GM12878 (cell line): ENCODE measurements at regions of chr4 and their contacts with region 1.

Region 1: DNA sequence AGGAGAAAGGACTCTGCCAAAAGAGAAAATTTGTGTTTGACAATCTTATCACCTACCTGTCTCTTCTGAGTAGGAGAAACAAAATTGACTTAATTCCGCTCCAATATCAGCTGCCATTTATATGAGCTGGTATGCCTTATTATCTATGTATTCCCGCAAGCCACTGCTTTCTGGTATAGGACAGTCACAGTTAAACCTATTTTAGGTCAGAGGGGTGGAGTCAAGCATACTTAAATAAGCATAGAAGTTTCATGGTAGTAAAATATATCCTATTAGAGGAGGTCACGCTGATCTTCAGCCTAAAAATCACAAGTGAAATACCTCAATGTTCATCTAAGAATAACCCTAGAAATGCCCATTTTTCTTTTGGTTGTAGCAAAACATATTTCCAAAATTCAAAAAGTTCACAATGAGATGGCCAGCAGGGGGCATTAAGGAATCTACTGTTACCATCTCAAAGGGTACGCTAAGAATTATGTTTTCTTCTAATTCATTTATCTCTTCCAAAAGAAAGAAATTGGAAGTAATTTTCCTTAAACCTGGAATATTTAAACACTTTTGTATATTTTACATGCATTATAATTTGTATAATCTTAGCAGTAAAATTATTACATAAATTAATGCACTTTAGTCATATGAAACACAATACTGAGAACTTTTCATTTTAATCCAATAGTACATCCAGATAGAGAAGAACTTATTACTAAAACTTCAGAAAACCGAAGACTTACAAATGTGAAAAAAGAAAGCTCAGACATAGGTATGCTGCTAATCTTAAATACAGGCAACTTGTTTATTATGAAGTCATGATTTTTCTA is 10.5 kb downstream of the PPAT start:
- DNase-seq: no peak
- ATAC-seq: peak; percentile 53
- H3K4me3 ChIP-seq: no peak overlapping the region
- H3K27ac ChIP-seq: no peak overlapping the region
- H3K4me1 ChIP-seq: peaks cover 5% of the 10 kb centered on the region
- H3K27me3 ChIP-seq: no peaks in the 10 kb centered on the region
- CTCF ChIP-seq: peak; percentile 53 to 57 (median 55)
- EP300 ChIP-seq: no peak
- POLR2A ChIP-seq: no peak
- RAD21 ChIP-seq: peak; percentile 55

Region 2: GRCh38 chr4:56387023-56388001 is 37.6 kb before region 1 on chr4 and contains the start of gene AASDH:
- CTCF ChIA-PET with region 1: interaction called, 10 read pairs
- POLR2A ChIA-PET with region 1: interaction called, 4 read pairs
- RAD21 ChIA-PET with region 1: interaction called, 6 read pairs
- SMC1A ChIA-PET with region 1: interaction called, 4 read pairs
- in situ Hi-C with region 1: no loop called
- intact Hi-C with region 1: no loop called
- DNase-seq: peak; percentile 87
- ATAC-seq: peak; percentile 96
- H3K4me3 ChIP-seq: peak within 1 kb of the TSS; percentile 83
- H3K27ac ChIP-seq: peak within 1 kb of the TSS; percentile 90
- H3K4me1 ChIP-seq: peaks cover 5% of the 10 kb centered on the region
- H3K27me3 ChIP-seq: no peaks in the 10 kb centered on the region
- CTCF ChIP-seq: no peak
- EP300 ChIP-seq: no peak
- POLR2A ChIP-seq: peak; percentile 97
- RAD21 ChIP-seq: no peak
- polyA plus RNA-seq, gene AASDH: 11.6 to 19.1 TPM

Region 3: DNA sequence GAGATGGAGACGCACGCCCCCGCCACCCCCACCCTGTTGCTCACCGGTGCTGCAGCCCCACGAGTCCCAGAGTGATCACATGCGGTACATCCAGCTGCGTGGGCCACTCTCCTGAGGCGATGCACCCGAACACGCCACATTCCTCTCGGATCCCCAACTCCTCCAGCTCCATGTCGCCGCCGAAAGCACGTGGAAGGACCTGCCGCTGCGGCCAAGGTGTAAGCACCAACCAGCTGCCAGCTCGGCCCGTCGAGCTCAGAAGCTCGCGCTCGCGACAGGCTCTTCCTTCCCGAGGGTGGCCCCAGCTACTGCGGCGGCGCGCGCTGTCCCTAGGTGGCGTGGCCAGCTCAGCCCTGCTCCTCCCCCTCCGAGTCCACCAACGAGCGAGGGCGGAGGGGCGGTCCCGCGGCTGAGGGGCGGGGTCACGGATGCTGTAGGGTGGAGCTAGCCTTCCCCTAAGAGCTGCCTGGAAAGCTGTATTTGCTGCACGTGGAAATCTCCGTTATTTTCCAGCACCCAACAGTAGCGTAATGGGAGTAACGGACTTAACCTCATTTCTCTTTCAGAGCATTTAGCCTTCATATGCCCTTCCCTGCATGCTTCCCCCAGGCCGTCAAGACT is 10.5 kb after region 1 on chr4 and contains the start of gene PPAT:
- CTCF ChIA-PET with region 1: interaction called, 89 read pairs
- POLR2A ChIA-PET with region 1: interaction called, 13 read pairs
- RAD21 ChIA-PET with region 1: interaction called, 41 read pairs
- SMC1A ChIA-PET with region 1: interaction called, 48 read pairs
- in situ Hi-C with region 1: no loop called
- intact Hi-C with region 1: no loop called
- DNase-seq: peak; percentile 94
- ATAC-seq: peak; percentile 81
- H3K4me3 ChIP-seq: peak within 1 kb of the TSS; percentile 90
- H3K27ac ChIP-seq: peak within 1 kb of the TSS; percentile 98
- H3K4me1 ChIP-seq: no peaks in the 10 kb centered on the region
- H3K27me3 ChIP-seq: no peaks in the 10 kb centered on the region
- CTCF ChIP-seq: peak in 2 of 3 experiments; percentile 7 to 15; a peak in 3 of 6 replicates
- EP300 ChIP-seq: no peak
- POLR2A ChIP-seq: peak; percentile 94
- RAD21 ChIP-seq: no peak
- polyA plus RNA-seq, gene PPAT: 24.9 to 32.6 TPM

Region 4: GRCh38 chr4:56460085-56460484 is 35.2 kb after region 1 on chr4:
- CTCF ChIA-PET with region 1: interaction called, 12 read pairs
- POLR2A ChIA-PET with region 1: interaction called, 5 read pairs
- RAD21 ChIA-PET with region 1: interaction called, 3 read pairs
- SMC1A ChIA-PET with region 1: interaction called, 5 read pairs
- in situ Hi-C with region 1: no loop called
- intact Hi-C with region 1: no loop called
- DNase-seq: no peak
- ATAC-seq: no peak
- H3K4me3 ChIP-seq: no peak overlapping the region
- H3K27ac ChIP-seq: no peak overlapping the region
- H3K4me1 ChIP-seq: no peaks in the 10 kb centered on the region
- H3K27me3 ChIP-seq: no peaks in the 10 kb centered on the region
- CTCF ChIP-seq: no peak
- EP300 ChIP-seq: no peak
- POLR2A ChIP-seq: no peak
- RAD21 ChIP-seq: no peak

Region 5: DNA sequence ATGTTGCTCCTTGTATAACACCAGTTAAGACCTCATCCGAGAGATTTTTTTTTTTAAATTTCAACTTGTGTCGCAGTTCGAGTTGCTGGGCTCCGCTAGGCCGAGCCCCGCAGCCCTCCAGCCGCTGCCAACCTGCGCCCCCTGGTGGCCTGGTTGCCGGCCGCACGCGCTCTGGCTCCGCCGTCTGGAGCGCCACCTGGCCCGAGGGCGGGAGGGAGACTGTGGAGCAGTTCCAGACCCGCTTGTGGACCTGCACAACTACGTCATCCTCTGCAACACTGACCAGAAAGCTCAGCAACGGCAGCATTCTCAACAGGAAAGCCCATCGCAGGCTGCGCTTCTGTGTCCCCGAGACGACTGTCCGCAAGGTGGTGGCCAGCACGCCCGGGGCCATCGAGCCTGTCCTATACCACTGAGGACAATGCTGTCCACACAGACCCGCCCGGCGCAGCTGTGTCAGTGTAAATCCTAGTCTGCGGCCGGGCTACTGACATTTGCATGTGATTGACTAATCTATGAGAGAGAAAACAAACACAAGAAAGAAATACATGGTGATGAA is 119.7 kb after region 1 on chr4:
- CTCF ChIA-PET with region 1: interaction called, 10 read pairs
- POLR2A ChIA-PET with region 1: no interaction called
- RAD21 ChIA-PET with region 1: interaction called, 5 read pairs
- SMC1A ChIA-PET with region 1: interaction called, 5 read pairs
- in situ Hi-C with region 1: no loop called
- intact Hi-C with region 1: loop called (anchors 1 kb)
- DNase-seq: peak; percentile 17
- ATAC-seq: peak; percentile 100
- H3K4me3 ChIP-seq: no peak overlapping the region
- H3K27ac ChIP-seq: no peak overlapping the region
- H3K4me1 ChIP-seq: no peaks in the 10 kb centered on the region
- H3K27me3 ChIP-seq: no peaks in the 10 kb centered on the region
- CTCF ChIP-seq: peak; percentile 94 to 99 (median 97); a peak in 5 of 6 replicates
- EP300 ChIP-seq: no peak
- POLR2A ChIP-seq: no peak
- RAD21 ChIP-seq: peak; percentile 78

Region 6: GRCh38 chr4:56786955-56787354 is 362.0 kb after region 1 on chr4:
- CTCF ChIA-PET with region 1: no interaction called
- POLR2A ChIA-PET with region 1: no interaction called
- RAD21 ChIA-PET with region 1: no interaction called
- SMC1A ChIA-PET with region 1: no interaction called
- in situ Hi-C with region 1: no loop called
- intact Hi-C with region 1: no loop called
- DNase-seq: no peak
- ATAC-seq: no peak
- H3K4me3 ChIP-seq: no peak overlapping the region
- H3K27ac ChIP-seq: no peak overlapping the region
- H3K4me1 ChIP-seq: peaks cover 7% of the 10 kb centered on the region
- H3K27me3 ChIP-seq: no peaks in the 10 kb centered on the region
- CTCF ChIP-seq: no peak
- EP300 ChIP-seq: no peak
- POLR2A ChIP-seq: no peak
- RAD21 ChIP-seq: no peak

Region 7: GRCh38 chr4:56843421-56843899 is 418.6 kb after region 1 on chr4:
- CTCF ChIA-PET with region 1: interaction called, 5 read pairs
- POLR2A ChIA-PET with region 1: no interaction called
- RAD21 ChIA-PET with region 1: interaction called, 3 read pairs
- SMC1A ChIA-PET with region 1: no interaction called
- in situ Hi-C with region 1: no loop called
- intact Hi-C with region 1: loop called (anchors 5 kb)
- DNase-seq: no peak
- ATAC-seq: no peak
- H3K4me3 ChIP-seq: no peak overlapping the region
- H3K27ac ChIP-seq: no peak overlapping the region
- H3K4me1 ChIP-seq: no peaks in the 10 kb centered on the region
- H3K27me3 ChIP-seq: no peaks in the 10 kb centered on the region
- CTCF ChIP-seq: no peak
- EP300 ChIP-seq: no peak
- POLR2A ChIP-seq: no peak
- RAD21 ChIP-seq: no peak